Kidney (tissue), 22 donors: ENCODE measurements at regions of chr6 and their contacts with region 1.

Region 1: DNA sequence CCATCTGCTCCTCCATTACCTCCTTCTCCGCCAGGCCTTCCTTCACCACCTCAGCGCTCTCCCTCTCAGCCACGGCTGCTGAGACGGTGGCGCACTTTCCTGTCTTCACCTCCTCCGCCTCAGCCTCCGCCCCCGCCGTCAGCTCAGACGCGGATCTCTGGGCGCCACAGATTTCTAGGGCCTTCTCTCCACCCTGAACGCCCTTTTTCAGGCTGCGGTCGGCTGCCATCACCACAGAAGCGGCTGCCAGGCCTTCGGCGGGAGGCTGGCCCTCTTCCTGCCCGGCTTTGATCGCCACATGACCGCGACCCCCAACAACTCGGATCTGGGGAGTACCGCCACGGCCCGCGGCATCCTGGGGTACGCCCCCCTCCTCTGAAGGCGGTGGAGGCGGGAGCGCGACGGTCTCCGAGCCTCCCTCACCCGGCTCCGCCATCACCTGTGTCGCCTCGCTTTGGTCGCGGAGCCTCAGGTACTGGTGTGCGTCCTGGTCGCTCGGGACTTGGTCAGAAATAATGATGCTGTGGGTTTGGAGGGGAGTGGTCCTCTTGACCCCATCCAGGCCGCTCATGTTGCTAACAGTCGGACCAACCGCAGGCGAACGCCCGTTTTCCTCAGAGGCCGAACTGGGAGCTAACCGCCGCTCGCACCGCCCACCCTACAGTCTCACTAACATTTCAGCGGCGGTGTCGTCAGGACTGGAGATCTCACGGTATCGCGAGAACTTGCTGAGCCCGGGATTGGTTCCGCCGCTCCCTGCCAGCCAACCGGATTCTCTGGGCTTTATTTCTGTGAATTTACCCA is at the start of gene TSPYL1:
- DNase-seq: peak; percentile 98 to 99 (median 98)
- H3K4me3 ChIP-seq: peak within 1 kb of the TSS; percentile 72 to 98 (median 84)
- H3K27ac ChIP-seq: peak within 1 kb of the TSS; percentile 96 to 100
- H3K4me1 ChIP-seq: peaks cover 2 to 23% (median 10%) of the 10 kb centered on the region in 3 donors
- H3K27me3 ChIP-seq: no peaks in the 10 kb centered on the region
- CTCF ChIP-seq: no peak
- total RNA-seq, gene TSPYL1: 112 TPM

Region 2: GRCh38 chr6:116217069-116217468 is 62.4 kb before region 1 on chr6:
- intact Hi-C with region 1: no loop called
- DNase-seq: no peak
- H3K4me3 ChIP-seq: no peak overlapping the region
- H3K27ac ChIP-seq: no peak overlapping the region
- H3K4me1 ChIP-seq: no peaks in the 10 kb centered on the region
- H3K27me3 ChIP-seq: no peaks in the 10 kb centered on the region
- CTCF ChIP-seq: no peak

Region 3: DNA sequence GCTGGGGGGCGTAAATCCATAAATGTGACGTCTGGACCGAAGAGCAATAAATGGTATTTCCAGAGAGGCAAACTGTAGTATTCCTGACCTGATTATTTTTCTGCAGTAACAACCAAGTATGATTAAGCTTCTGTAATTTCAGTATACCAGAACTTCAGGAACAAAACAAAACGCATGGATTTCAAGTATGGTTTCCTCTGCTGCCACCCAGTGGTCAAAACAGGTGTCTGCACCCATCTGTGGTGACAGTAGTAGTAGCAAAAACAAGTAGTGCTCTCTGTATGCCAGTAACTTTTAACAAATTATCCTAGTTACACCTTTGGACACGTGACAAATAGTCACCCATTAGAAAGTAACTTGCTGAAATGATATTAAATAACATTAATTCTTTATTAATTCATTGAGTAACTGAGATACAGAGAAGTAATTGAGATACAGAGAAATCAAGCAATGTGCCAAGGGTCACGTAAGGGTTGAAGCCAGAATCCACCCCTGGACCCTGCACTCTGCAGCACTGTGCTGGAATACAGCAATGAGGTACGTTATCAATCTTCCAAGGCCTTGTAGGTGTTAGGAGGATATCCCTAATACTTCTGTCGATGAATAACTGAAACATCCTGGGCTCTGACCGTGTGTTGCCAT is 282.0 kb after region 1 on chr6:
- intact Hi-C with region 1: loop called (anchors 10 kb)
- DNase-seq: peak; percentile 75 to 86 (median 83)
- H3K4me3 ChIP-seq: peak overlapping the region in 2 of 3 donors; percentile 35
- H3K27ac ChIP-seq: no peak overlapping the region
- H3K4me1 ChIP-seq: peaks cover 0 to 14% (median 5%) of the 10 kb centered on the region in 3 donors
- H3K27me3 ChIP-seq: no peaks in the 10 kb centered on the region
- CTCF ChIP-seq: peak; percentile 91